Activated CD8-positive, alpha-beta T cell treated with anti-CD3 and anti-CD28 coated beads for 36 hours (primary cell): ENCODE measurements at regions of chr6 and their contacts with region 1.

Region 1: GRCh38 chr6:13574149-13574570 is 241 bp upstream of the SIRT5 start:
- DNase-seq: peak; percentile 94
- ATAC-seq: peak; percentile 82
- H3K4me3 Mint-ChIP-seq: peak overlapping the region; percentile 98
- H3K27ac Mint-ChIP-seq: peak overlapping the region; percentile 99
- H3K4me1 Mint-ChIP-seq: peaks cover 24% of the 10 kb centered on the region
- H3K27me3 Mint-ChIP-seq: no peaks in the 10 kb centered on the region
- CTCF ChIP-seq: peak; percentile 52

Region 2: GRCh38 chr6:13328076-13328874 is 245.9 kb before region 1 on chr6 and contains the start of gene TBC1D7:
- CTCF ChIA-PET with region 1: interaction called, 27 read pairs
- POLR2A ChIA-PET with region 1: interaction called, 8 read pairs
- intact Hi-C with region 1: no loop called
- DNase-seq: peak; percentile 93
- ATAC-seq: peak; percentile 91
- H3K4me3 Mint-ChIP-seq: peak within 1 kb of the TSS; percentile 93
- H3K27ac Mint-ChIP-seq: peak within 1 kb of the TSS; percentile 93
- H3K4me1 Mint-ChIP-seq: peaks cover 22% of the 10 kb centered on the region
- H3K27me3 Mint-ChIP-seq: no peaks in the 10 kb centered on the region
- CTCF ChIP-seq: peak; percentile 16
- total RNA-seq, gene TBC1D7: 21.3 to 23.8 TPM

Region 3: DNA sequence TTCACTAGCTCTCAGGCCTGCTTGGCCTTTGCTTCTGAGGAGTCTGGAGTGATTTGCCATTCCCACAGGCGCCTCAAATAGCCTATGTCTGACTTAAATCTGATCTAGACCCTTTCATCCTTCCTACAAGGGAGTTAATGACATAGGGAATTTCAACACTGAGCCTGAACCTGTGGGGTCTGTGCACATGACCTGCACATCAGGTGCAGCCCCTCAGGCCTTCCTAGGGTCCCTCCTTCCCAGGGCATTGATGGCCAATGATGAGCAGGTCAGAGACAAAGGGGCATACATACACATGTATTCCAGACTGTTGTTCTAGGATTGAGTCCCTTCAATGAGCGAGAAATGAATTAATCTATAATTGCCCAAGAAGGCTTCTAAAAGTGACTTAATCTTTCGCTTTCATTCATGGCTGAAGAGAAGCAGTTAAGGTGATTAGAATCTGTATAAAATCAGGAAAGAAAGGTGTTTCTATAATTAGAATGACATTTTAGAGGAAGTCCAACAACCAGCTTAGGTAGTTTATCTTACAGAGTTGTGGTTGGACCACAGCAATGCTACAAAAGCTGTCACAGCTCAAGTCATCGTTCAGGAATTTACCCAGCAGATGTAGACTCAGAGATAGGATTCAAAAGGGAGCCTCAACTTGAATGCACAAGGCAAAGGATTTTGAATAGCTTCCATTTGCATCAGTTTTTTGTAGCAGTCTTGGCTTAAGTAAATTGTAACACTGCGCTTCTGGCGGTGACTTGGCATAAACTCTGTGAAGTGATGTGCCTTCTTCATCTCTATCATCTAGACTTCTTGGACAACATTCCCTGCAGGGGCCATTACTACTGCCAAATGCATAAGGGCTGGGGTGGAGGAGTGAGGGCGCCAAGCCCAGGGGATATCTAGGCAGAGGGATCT is 218.9 kb before region 1 on chr6:
- CTCF ChIA-PET with region 1: interaction called, 12 read pairs
- POLR2A ChIA-PET with region 1: interaction called, 8 read pairs
- intact Hi-C with region 1: no loop called
- DNase-seq: peak; percentile 58
- ATAC-seq: peak; percentile 66
- H3K4me3 Mint-ChIP-seq: peak overlapping the region; percentile 68
- H3K27ac Mint-ChIP-seq: peak overlapping the region; percentile 95
- H3K4me1 Mint-ChIP-seq: peaks cover 46% of the 10 kb centered on the region
- H3K27me3 Mint-ChIP-seq: no peaks in the 10 kb centered on the region
- CTCF ChIP-seq: no peak

Region 4: GRCh38 chr6:13487122-13488014 is 86.8 kb before region 1 on chr6 and contains the start of gene GFOD1:
- CTCF ChIA-PET with region 1: interaction called, 16 read pairs
- POLR2A ChIA-PET with region 1: interaction called, 15 read pairs
- intact Hi-C with region 1: loop called (anchors 10 kb)
- DNase-seq: peak; percentile 83
- ATAC-seq: peak; percentile 79
- H3K4me3 Mint-ChIP-seq: peak within 1 kb of the TSS; percentile 85
- H3K27ac Mint-ChIP-seq: peak within 1 kb of the TSS; percentile 91
- H3K4me1 Mint-ChIP-seq: peaks cover 38% of the 10 kb centered on the region
- H3K27me3 Mint-ChIP-seq: peaks cover 3% of the 10 kb centered on the region
- CTCF ChIP-seq: peak; percentile 34
- total RNA-seq, gene GFOD1: 12.3 to 12.9 TPM

Region 5: GRCh38 chr6:13593720-13594119 is 19.6 kb after region 1 on chr6:
- CTCF ChIA-PET with region 1: interaction called, 12 read pairs
- POLR2A ChIA-PET with region 1: interaction called, 4 read pairs
- intact Hi-C with region 1: no loop called
- DNase-seq: no peak
- ATAC-seq: no peak
- H3K4me3 Mint-ChIP-seq: no peak overlapping the region
- H3K27ac Mint-ChIP-seq: no peak overlapping the region
- H3K4me1 Mint-ChIP-seq: peaks cover 4% of the 10 kb centered on the region
- H3K27me3 Mint-ChIP-seq: no peaks in the 10 kb centered on the region
- CTCF ChIP-seq: no peak

Region 6: GRCh38 chr6:13767121-13767808 is 193.1 kb after region 1 on chr6:
- CTCF ChIA-PET with region 1: interaction called, 10 read pairs
- POLR2A ChIA-PET with region 1: no interaction called
- intact Hi-C with region 1: no loop called
- DNase-seq: peak; percentile 72
- ATAC-seq: peak; percentile 47
- H3K4me3 Mint-ChIP-seq: peak overlapping the region; percentile 67
- H3K27ac Mint-ChIP-seq: peak overlapping the region; percentile 64
- H3K4me1 Mint-ChIP-seq: peaks cover 38% of the 10 kb centered on the region
- H3K27me3 Mint-ChIP-seq: peaks cover 3% of the 10 kb centered on the region
- CTCF ChIP-seq: peak; percentile 30